Posterior cingulate gyrus (tissue), 11 donors: ENCODE measurements at regions of chr6 and their contacts with region 1.

Region 1: GRCh38 chr6:53171605-53172446 is 23.2 kb upstream of the GCM1 start:
- DNase-seq: peak; percentile 86 to 99 (median 92)

Region 2: DNA sequence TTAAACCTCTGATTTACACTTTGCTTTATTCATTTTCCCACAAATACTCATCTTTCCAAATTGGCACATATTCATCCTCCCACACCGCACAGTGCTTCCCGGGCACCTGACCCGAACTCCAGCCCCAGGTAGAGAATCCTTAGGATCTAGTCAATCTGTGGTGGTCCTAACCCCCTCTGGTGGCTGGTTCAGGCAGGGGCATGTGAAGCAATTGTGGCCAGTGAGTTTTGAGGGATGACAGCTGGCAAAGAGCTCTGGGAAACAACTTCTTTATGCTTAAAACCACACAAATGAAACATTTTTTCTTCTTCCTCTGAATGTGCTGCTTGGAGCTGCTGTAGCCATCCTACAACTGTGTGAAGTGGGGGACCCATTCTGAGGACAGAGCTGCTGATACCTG is 122.3 kb after region 1 on chr6:
- intact Hi-C with region 1: loop called (anchors 10 kb)
- DNase-seq: peak in 3 of 10 donors; percentile 11 to 47 (median 15)

Region 3: GRCh38 chr6:53410508-53411258 is 238.9 kb after region 1 on chr6:
- intact Hi-C with region 1: loop called (anchors 5 kb)
- DNase-seq: peak in 6 of 10 donors; percentile 9 to 87 (median 44)

Region 4: DNA sequence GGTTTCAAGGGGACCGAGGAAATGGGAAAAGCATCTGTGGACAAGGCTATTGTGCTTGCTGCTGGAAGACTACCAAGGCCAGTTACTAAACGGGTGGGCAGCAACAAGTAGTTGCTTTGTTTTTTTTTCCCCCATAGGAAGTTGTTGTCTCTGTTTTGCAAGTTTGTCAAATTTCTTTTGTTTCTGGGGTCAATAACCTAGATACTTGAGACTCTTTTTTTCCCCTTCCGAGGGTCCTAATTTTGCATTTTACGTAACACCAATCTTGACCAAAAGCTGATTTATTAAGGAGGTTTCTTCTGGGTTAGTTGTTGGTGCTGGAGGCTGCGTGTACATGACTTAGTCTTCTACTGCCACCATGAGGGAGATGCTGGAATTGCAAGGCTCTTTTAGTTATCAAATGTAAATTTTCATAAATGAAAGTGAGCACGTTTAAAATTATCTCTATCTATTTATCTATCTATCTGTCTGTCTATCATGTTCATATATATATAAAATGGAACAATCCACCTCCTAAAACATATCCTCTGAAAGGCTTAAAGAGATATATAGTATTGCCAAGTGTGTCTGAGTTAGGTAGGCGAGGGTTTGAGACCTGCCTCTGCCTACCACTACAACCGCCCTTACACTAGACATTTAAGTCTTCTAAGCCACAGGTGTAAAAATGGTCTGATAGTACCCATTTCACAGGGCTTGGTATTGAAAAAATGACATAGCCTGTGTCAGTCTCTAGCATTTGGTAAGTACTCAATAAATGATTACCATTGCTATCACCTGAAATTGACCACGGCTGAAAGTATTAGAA is 312.9 kb after region 1 on chr6:
- intact Hi-C with region 1: loop called (anchors 1 kb)
- DNase-seq: peak in 5 of 10 donors; percentile 36 to 76 (median 67)

Region 5: GRCh38 chr6:53725791-53726431 is 554.1 kb after region 1 on chr6:
- intact Hi-C with region 1: loop called (anchors 5 kb)
- DNase-seq: peak; percentile 67 to 97 (median 84)

Region 6: GRCh38 chr6:53906842-53907241 is 735.0 kb after region 1 on chr6:
- intact Hi-C with region 1: no loop called
- DNase-seq: peak in 3 of 10 donors; percentile 41 to 86 (median 79)